Activated CD4-positive, alpha-beta T cell treated with anti-CD3 and anti-CD28 coated beads, Interleukin-2, amount 10 ng/mL, durations not matched to agents 24 days and 14 days (primary cell): ENCODE measurements at regions of chr6 and their contacts with region 1.

Region 1: DNA sequence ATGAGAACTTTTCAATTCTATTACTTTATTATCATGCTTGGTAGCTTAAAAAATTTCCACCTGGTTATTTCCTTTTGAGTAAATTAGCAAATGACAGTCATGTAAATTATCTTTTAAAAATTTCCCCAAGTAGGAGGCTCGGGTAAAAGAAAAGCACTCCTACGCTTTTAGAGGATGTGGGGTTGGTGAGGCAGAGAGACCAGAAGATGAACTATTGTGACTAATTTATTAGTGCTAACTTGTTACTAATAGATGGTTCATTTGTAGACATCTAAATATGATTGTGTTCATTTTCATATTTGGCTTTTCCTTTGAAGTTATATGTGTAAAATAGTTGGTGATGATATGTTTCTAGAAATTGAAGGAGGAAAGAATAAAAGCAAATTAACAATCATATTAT is 27.0 kb downstream of the ZNF292 start:
- DNase-seq: no peak
- H3K4me3 Mint-ChIP-seq: peak overlapping the region; percentile 43
- H3K27ac Mint-ChIP-seq: peak overlapping the region; percentile 89
- H3K4me1 Mint-ChIP-seq: peaks cover 48% of the 10 kb centered on the region
- H3K27me3 Mint-ChIP-seq: no peaks in the 10 kb centered on the region

Region 2: GRCh38 chr6:87197547-87197946 is 15.2 kb after region 1 on chr6:
- intact Hi-C with region 1: loop called (anchors 1 kb)
- DNase-seq: no peak
- H3K4me3 Mint-ChIP-seq: no peak overlapping the region
- H3K27ac Mint-ChIP-seq: no peak overlapping the region
- H3K4me1 Mint-ChIP-seq: peaks cover 43% of the 10 kb centered on the region
- H3K27me3 Mint-ChIP-seq: no peaks in the 10 kb centered on the region